ENCODE measurements at regions of chr1 and their contacts with region 1.

Region 1: DNA sequence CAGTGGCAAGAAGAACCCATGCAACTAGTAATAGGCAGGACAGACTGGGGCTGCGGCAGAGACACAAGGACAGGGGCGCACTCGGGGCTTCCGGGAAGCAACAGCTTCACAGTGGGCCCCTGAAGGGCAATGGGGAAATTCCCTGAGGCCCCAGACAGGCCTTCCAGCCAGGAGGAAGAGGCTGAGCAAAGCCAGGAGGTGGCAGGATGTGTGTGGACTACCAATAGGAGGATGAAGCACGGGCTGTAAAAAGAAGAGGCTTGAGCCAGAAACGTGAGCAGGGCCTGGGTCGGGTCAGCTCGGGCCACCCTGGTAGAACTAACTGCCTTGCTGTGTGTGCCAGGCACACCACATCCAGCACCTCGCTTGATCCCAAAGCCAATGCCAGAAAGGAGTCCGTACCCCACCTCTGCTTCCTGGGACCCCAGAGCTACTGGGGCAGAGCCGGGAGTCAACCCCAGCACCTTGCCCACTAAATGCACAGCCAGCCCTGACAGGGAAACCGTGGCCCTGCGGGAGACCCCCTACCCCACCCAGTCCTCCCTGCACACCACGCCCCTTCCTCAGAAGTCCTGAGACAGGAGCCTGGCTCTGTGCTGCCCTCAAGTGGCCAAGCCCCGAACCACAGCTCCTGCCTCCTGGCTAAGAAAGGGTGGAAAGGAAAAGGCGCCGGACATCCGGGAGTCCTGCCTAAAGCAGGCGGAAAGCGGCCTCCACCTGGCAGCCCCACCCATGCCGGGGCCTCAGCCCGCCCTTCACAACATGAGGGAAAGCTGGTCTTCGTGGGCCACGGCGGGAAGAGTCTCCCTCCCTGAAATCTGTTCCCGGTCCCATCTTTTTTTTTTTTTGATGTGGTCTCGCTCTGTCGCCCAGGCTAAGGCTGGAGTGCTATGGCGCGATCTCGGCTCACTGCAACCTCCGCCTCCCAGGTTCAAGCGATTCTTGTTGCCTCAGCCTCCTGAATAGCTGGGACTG is 33.7 kb downstream of the TTC39A start:
- DNase-seq: peak; percentile 92
- ATAC-seq: peak; percentile 92

Region 2: GRCh38 chr1:51192213-51192843 is 104.3 kb before region 1 on chr1:
- intact Hi-C with region 1: loop called (anchors 10 kb)
- DNase-seq: peak; percentile 45
- ATAC-seq: peak; percentile 79

Region 3: GRCh38 chr1:51235673-51236530 is 60.8 kb before region 1 on chr1 and contains the start of gene RNF11:
- intact Hi-C with region 1: loop called (anchors 10 kb)
- DNase-seq: peak; percentile 96
- ATAC-seq: peak; percentile 99
- total RNA-seq, gene RNF11: 106 TPM

Measured in Right ventricle myocardium superior (tissue), 1 donor.